ENCODE measurements at regions of chr7 and their contacts with region 1.

Region 1: DNA sequence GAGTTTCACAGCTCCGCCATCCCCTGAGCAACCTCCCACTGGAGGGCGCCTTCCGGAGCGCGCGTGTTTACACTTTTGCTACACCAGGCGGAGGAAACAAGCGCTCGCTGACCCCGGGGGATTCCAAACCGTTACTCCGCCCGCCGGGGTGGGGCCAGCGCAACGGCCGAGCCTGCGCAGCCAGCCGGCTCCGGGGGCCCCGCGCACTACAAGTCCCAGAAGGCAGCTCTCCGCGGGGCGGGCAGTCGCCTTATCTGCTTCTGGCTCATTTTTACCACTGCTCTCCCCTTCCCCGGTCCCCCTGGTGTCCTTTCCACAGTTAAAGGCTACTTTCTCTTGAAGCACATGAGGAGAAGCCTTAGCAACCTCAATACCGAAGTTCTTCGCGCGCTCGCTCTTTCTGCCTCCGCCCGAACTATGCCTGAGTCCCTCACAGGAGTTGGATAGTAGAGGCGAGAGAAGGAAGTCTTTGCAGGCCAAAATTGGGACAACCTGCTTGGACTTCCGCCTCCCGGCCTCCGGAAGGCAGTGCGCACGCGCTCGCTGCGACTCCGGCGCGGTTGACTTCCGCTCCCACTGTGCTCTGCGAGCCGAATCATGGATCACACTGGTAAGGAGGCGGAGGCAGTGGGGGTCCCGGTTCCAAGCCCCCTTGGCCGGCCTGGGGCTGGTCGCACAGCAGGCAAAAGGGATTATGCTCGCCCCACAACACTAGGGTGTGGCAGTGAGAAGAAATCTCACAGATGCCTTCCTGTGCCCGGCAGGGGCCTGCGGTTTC is at the start of gene CBLL1:
- DNase-seq: peak; percentile 99
- ATAC-seq: peak; percentile 94
- H3K4me3 Mint-ChIP-seq: peak within 1 kb of the TSS; percentile 88
- H3K27ac Mint-ChIP-seq: peak within 1 kb of the TSS; percentile 100
- H3K4me1 Mint-ChIP-seq: peaks cover 44% of the 10 kb centered on the region
- H3K27me3 Mint-ChIP-seq: no peaks in the 10 kb centered on the region
- total RNA-seq, gene CBLL1: 36.9 to 57.9 TPM

Region 2: DNA sequence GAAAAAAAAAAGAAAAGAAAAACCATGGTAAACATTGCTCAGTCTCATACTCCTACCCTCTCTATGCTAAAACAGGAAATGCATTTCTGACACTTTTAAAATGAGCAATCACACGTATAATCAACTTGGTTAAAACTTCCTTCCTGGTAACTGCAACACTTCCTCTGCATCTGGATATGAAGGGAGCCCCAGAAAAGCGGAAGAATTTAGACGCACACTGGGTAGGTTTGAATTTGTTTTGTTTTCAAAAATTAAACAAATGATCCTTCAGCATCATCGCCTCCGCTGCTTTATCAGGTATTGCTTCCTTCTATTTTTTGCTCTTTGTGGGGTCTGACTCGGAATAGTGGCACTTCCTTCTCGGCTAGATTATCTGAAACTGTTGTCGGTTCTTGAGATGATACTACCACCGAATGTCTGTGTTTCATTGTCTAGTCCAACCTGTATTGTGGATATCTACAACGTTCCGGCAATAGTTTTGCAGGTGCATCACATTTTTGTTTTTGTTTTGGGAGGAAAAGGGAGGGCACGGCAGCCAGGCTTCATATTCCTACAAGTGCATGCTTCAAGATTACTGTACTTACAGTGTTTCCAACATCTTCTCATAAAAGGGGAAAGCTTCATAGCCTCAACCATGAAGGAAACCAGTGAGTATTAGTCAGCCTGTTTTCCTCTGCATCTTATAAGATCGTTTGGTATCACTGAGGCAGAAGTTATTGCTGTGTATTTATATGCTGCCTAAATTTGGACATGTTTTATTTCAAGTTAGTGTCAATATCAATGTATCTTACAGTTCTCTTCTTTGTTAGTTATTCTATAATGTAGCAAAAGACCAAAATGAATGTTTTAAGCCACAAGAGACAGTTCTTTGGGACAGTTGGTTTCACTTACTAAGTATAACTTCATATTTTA is 878.4 kb before region 1 on chr7 and contains the start of gene PIK3CG:
- CTCF ChIA-PET with region 1: no interaction called
- POLR2A ChIA-PET with region 1: no interaction called
- intact Hi-C with region 1: loop called in 1 of 2 experiments (anchors 5 kb)
- DNase-seq: no peak
- ATAC-seq: peak; percentile 79
- H3K4me3 Mint-ChIP-seq: peak within 1 kb of the TSS; percentile 83
- H3K27ac Mint-ChIP-seq: peak within 1 kb of the TSS; percentile 92
- H3K4me1 Mint-ChIP-seq: peaks cover 75% of the 10 kb centered on the region
- H3K27me3 Mint-ChIP-seq: no peaks in the 10 kb centered on the region
- total RNA-seq, gene PIK3CG: 9.9 to 14.3 TPM

Region 3: DNA sequence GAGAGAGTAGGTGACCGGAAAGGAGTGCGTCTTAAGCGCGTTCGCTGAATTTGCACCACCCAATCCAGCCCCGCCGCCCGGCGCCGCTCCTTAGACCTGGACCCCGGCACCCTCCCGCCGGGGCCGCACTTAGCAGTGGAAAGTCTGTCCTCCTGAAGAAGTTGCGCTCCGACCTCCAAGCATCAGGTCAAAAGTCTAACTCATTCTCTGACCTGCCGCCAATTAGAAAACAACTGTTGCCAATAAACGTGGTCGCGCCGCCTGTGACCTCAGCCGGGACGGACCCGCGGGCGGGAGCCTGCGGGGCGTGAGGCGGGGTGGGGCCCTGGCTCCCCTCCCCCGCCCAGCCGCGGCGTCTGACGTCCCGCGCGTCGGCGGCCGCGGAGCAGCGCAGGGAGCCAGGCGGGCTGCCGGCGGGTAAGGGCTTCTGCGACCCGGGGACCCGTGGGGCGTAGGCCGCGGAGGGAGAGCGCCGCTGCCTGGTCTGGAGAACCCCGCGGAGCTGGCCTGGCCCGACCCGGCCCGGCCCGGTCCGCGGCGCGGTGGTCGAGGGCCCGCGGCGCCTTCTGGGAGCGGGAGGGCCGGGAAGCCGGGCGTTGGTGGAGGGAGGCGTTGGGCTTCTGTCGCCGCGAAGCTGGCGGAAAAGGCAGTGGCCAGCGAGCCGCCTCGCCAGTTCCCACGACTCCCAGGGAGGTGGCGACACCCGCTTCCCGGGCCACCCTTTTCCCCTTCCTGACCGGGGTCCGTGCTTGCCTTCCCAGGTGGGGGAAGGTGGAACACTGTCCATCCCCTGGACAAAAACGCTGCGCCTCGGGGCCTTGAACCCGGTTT is 163.7 kb before region 1 on chr7 and contains the start of gene BCAP29:
- CTCF ChIA-PET with region 1: interaction called, 6 read pairs
- POLR2A ChIA-PET with region 1: no interaction called
- intact Hi-C with region 1: loop called (anchors 1 to 5 kb)
- DNase-seq: peak; percentile 83
- ATAC-seq: peak; percentile 96
- H3K4me3 Mint-ChIP-seq: peak within 1 kb of the TSS; percentile 84
- H3K27ac Mint-ChIP-seq: peak within 1 kb of the TSS; percentile 88
- H3K4me1 Mint-ChIP-seq: peaks cover 18% of the 10 kb centered on the region
- H3K27me3 Mint-ChIP-seq: no peaks in the 10 kb centered on the region
- total RNA-seq, gene BCAP29: 31.4 to 38.8 TPM

Region 4: DNA sequence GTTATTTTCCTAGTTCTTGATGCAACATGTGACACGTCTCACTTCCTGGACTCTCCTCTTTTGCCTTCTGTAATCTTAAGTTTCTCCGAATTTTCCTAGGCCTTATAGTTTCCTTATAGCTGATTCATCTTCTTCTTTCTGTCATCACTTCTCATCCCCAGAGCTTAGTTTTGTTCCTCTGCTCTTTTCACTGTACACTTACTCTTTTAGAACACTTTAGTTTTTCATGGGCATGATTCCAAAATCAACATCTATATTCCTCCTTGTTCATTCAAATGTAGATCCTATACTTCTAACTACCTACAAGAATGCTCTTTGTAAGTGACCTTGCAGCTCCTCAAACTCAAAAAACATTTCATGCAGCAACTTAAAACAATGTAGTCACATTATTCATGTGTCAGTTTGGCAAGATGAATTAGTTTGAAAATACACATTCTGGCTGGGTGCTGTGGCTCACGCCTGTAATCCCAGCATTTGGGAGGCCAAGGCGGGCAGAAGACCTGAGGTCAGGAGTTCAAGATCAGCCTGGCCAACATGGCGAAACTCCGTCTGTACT is 72.3 kb after region 1 on chr7:
- CTCF ChIA-PET with region 1: interaction called, 5 read pairs
- POLR2A ChIA-PET with region 1: no interaction called
- intact Hi-C with region 1: loop called (anchors 1 to 2 kb)
- DNase-seq: no peak
- ATAC-seq: no peak
- H3K4me3 Mint-ChIP-seq: no peak overlapping the region
- H3K27ac Mint-ChIP-seq: peak overlapping the region; percentile 81
- H3K4me1 Mint-ChIP-seq: peaks cover 35% of the 10 kb centered on the region
- H3K27me3 Mint-ChIP-seq: no peaks in the 10 kb centered on the region

Region 5: DNA sequence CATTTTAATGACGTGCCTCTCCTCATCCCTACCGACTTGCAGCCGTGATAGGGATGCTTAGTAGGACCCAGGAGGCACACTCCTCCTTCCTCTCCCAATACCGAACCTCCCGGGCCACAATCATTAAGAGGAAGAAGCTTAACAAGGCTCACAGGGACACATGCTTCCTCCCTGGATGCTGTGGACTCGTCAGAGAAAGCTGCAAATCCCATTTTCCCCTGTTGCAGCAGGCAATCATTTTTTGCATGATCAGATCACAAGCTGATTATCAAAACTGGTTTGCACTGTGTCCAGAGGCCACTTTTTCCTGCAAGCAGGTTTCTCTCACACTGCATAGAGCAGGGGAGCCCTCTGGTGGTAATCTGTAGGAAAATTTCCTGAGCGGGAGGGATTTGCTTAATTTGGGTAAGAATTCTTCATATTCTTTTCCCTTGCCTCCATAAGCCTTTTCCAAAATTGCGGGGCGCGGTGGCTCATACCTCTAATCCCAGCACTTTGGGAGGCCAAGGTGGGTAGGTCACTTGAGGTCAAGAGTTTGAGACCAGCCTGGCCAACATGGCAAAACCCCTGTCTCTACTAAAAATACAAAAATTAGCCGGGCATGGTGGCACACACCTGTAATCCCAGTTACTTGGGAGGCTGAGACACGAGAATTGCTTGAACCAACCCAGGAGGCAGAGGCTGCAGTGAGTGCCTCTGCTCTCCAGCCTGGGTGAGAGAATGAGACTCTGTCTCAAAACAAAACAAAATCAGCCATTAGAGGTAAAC is 402.5 kb after region 1 on chr7:
- CTCF ChIA-PET with region 1: no interaction called
- POLR2A ChIA-PET with region 1: no interaction called
- intact Hi-C with region 1: loop called in 1 of 2 experiments (anchors 5 kb)
- DNase-seq: peak; percentile 69
- ATAC-seq: peak; percentile 55
- H3K4me3 Mint-ChIP-seq: no peak overlapping the region
- H3K27ac Mint-ChIP-seq: no peak overlapping the region
- H3K4me1 Mint-ChIP-seq: no peaks in the 10 kb centered on the region
- H3K27me3 Mint-ChIP-seq: peaks cover 3% of the 10 kb centered on the region

Region 6: GRCh38 chr7:108569381-108570145 is 825.8 kb after region 1 on chr7 and contains the starts of genes DNAJB9 and THAP5:
- CTCF ChIA-PET with region 1: no interaction called
- POLR2A ChIA-PET with region 1: interaction called, 3 read pairs
- intact Hi-C with region 1: loop called in 1 of 2 experiments (anchors 2 kb)
- DNase-seq: peak; percentile 99
- ATAC-seq: peak; percentile 91
- H3K4me3 Mint-ChIP-seq: peak within 1 kb of the TSS; percentile 98
- H3K27ac Mint-ChIP-seq: peak within 1 kb of the TSS; percentile 99
- H3K4me1 Mint-ChIP-seq: peaks cover 40% of the 10 kb centered on the region
- H3K27me3 Mint-ChIP-seq: no peaks in the 10 kb centered on the region
- total RNA-seq, gene DNAJB9: 8.3 to 8.4 TPM
- total RNA-seq, gene THAP5: 30.1 to 43.4 TPM